ENCODE measurements at regions of chr15 and their contacts with region 1.

Region 1: GRCh38 chr15:71575474-71576045 is 234.8 kb upstream of the NR2E3 start:
- DNase-seq: no peak
- ATAC-seq: peak; percentile 20

Region 2: DNA sequence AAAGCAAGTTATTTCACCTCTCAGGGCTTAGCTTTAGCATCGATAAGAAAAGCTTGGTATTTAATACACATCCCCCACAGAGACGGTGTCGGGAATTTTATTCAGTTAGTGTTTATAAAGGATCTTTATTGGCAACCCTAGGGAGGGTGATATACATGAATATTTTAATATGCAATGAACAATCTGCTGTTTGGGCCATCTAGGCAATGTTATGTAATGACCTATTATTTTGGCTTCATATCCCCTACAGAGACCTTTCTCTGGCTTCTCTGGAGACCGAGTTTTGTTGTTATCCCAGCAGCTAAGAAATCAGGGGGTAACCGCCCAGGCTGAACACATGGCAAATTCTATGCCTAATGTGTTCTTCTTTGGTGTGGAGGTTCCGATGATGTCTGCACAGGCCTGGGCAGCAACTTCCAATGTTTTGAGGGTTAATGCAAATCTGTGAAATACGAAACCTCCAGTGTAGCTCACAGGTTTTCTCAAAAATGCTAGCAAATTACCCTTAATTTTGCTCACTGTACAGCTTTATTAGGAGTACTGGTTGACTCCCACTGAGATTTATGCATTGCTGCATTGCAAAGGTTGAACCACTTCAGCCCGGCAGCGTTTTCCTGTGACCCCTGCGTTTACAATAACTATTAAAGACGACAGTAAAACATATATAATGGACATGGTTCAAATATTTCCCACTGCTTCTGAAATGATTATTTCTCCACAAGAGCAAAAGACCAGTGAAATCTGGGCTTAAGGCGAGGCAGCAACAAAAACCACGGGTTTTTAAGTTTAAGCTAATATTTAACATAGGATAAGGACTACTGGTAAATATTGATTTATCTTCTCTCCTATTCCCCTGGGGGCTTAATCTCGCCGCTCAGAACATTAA is 63.5 kb before region 1 on chr15:
- intact Hi-C with region 1: no loop called
- DNase-seq: no peak
- ATAC-seq: no peak

Region 3: DNA sequence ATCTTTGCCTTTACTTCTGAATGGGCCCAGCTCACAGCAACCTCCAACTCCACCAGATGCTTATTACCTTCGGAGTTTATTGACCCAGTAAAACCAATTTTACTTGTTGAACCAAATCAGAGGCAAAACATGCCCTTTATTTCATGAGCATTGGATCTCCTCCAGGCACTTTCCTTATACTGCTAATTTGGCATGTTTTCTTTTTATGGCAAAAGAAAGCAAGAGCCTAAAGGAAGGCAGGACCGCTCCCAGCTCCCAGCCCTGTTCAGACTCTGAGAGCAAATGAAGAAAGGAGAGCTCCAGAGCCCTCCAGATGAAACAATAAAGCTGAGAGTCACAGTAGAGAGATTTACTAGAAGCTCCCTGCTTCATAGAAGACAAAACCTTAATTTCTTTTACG is 153.3 kb after region 1 on chr15:
- intact Hi-C with region 1: loop called (anchors 10 kb)
- DNase-seq: no peak
- ATAC-seq: no peak

Measured in left ventricle myocardium superior (tissue), 1 donor.